CD8-positive, alpha-beta T cell (primary cell): ENCODE measurements at regions of chr16 and their contacts with region 1.

Region 1: GRCh38 chr16:77675464-77676324 is 46.6 kb upstream of the NUDT7 start:
- DNase-seq: peak; percentile 26 to 73 (median 56)
- ATAC-seq: peak; percentile 70
- H3K4me3 ChIP-seq: no peak overlapping the region
- H3K4me3 Mint-ChIP-seq: no peak overlapping the region
- H3K27ac ChIP-seq: no peak overlapping the region
- H3K27ac Mint-ChIP-seq: no peak overlapping the region
- H3K4me1 ChIP-seq: no peaks in the 10 kb centered on the region
- H3K4me1 Mint-ChIP-seq: no peaks in the 10 kb centered on the region
- H3K27me3 ChIP-seq: no peaks in the 10 kb centered on the region
- H3K27me3 Mint-ChIP-seq: peaks cover 7% of the 10 kb centered on the region
- CTCF ChIP-seq: peak; percentile 91

Region 2: GRCh38 chr16:77637940-77638339 is 37.8 kb before region 1 on chr16:
- CTCF ChIA-PET with region 1: no interaction called
- POLR2A ChIA-PET with region 1: no interaction called
- intact Hi-C with region 1: no loop called
- DNase-seq: no peak
- ATAC-seq: no peak
- H3K4me3 ChIP-seq: no peak overlapping the region
- H3K4me3 Mint-ChIP-seq: no peak overlapping the region
- H3K27ac ChIP-seq: no peak overlapping the region
- H3K27ac Mint-ChIP-seq: no peak overlapping the region
- H3K4me1 ChIP-seq: no peaks in the 10 kb centered on the region
- H3K4me1 Mint-ChIP-seq: no peaks in the 10 kb centered on the region
- H3K27me3 ChIP-seq: no peaks in the 10 kb centered on the region
- H3K27me3 Mint-ChIP-seq: peaks cover 7% of the 10 kb centered on the region
- CTCF ChIP-seq: no peak

Region 3: GRCh38 chr16:77782694-77783093 is 107.0 kb after region 1 on chr16:
- CTCF ChIA-PET with region 1: no interaction called
- POLR2A ChIA-PET with region 1: no interaction called
- intact Hi-C with region 1: loop called in 1 of 2 experiments (anchors 5 kb)
- DNase-seq: no peak
- ATAC-seq: no peak
- H3K4me3 ChIP-seq: no peak overlapping the region
- H3K4me3 Mint-ChIP-seq: no peak overlapping the region
- H3K27ac ChIP-seq: no peak overlapping the region
- H3K27ac Mint-ChIP-seq: no peak overlapping the region
- H3K4me1 ChIP-seq: no peaks in the 10 kb centered on the region
- H3K4me1 Mint-ChIP-seq: no peaks in the 10 kb centered on the region
- H3K27me3 ChIP-seq: peaks cover 0 to 4% of the 10 kb centered on the region in 2 experiments
- H3K27me3 Mint-ChIP-seq: peaks cover 28% of the 10 kb centered on the region
- CTCF ChIP-seq: no peak

Region 4: GRCh38 chr16:77971306-77972271 is 295.9 kb after region 1 on chr16:
- CTCF ChIA-PET with region 1: interaction called, 15 read pairs
- POLR2A ChIA-PET with region 1: no interaction called
- intact Hi-C with region 1: loop called in 1 of 2 experiments (anchors 1 kb)
- DNase-seq: peak; percentile 34 to 83 (median 70)
- ATAC-seq: no peak
- H3K4me3 ChIP-seq: no peak overlapping the region
- H3K4me3 Mint-ChIP-seq: no peak overlapping the region
- H3K27ac ChIP-seq: no peak overlapping the region
- H3K27ac Mint-ChIP-seq: no peak overlapping the region
- H3K4me1 ChIP-seq: no peaks in the 10 kb centered on the region
- H3K4me1 Mint-ChIP-seq: no peaks in the 10 kb centered on the region
- H3K27me3 ChIP-seq: no peaks in the 10 kb centered on the region
- H3K27me3 Mint-ChIP-seq: peaks cover 22% of the 10 kb centered on the region
- CTCF ChIP-seq: peak; percentile 65

Region 5: DNA sequence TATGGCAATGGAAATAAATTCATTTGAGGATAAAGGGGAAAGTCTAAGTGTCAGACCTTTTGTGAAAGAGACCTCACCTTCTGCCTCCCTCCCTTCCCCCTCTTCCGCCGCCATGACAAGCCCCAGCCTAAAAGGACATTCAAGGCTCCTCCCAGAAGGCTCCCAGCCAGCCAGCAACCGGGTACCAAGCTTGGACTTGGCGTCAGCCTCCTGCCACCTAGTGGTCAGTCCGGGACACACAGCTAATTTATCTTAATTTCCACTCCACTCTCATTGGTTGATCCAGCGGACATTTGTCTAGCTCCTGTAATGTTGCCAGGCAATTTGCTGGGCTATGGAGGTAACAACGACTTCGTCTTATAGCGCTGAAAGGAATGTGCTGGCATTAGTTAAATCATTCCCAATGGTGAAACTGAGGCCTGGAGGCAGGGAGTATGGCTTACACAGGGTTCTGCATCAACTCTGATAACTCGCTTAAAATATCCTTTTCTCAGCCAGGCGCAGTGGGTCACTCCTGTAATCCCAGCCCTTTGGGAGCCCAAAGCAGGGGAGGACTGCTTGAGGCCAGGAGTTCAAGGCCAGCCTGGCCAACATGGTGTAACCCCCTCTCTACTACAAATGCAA is 327.3 kb after region 1 on chr16:
- CTCF ChIA-PET with region 1: interaction called, 22 read pairs
- POLR2A ChIA-PET with region 1: interaction called, 3 read pairs
- intact Hi-C with region 1: loop called in 1 of 2 experiments (anchors 1 kb)
- DNase-seq: peak; percentile 16 to 70 (median 51)
- ATAC-seq: peak; percentile 63
- H3K4me3 ChIP-seq: no peak overlapping the region
- H3K4me3 Mint-ChIP-seq: no peak overlapping the region
- H3K27ac ChIP-seq: no peak overlapping the region
- H3K27ac Mint-ChIP-seq: no peak overlapping the region
- H3K4me1 ChIP-seq: no peaks in the 10 kb centered on the region
- H3K4me1 Mint-ChIP-seq: no peaks in the 10 kb centered on the region
- H3K27me3 ChIP-seq: no peaks in the 10 kb centered on the region
- H3K27me3 Mint-ChIP-seq: peaks cover 14% of the 10 kb centered on the region
- CTCF ChIP-seq: peak; percentile 63

Region 6: DNA sequence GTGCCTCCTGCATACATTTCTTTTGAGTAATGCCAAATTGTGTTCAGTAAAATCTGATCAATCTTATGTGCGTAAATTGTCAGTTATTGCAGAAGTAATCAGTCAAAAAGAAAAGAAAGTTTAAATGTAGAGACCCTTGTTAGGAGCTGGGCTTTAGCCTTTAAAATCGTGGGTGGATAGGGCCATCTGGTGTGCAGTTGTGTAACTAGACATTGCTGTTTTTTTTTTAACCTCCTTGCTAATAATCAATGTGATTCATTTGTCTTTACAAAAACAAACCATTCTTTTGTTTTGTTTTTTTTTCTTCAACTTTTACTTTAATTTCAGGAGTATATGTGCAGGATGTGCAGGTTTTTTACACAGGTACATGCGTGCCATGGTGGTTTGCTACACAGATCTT is 418.5 kb after region 1 on chr16:
- CTCF ChIA-PET with region 1: no interaction called
- POLR2A ChIA-PET with region 1: no interaction called
- intact Hi-C with region 1: loop called (anchors 1 to 2 kb)
- DNase-seq: no peak
- ATAC-seq: no peak
- H3K4me3 ChIP-seq: no peak overlapping the region
- H3K4me3 Mint-ChIP-seq: no peak overlapping the region
- H3K27ac ChIP-seq: no peak overlapping the region
- H3K27ac Mint-ChIP-seq: no peak overlapping the region
- H3K4me1 ChIP-seq: peaks cover 6% of the 10 kb centered on the region
- H3K4me1 Mint-ChIP-seq: peaks cover 5% of the 10 kb centered on the region
- H3K27me3 ChIP-seq: no peaks in the 10 kb centered on the region
- H3K27me3 Mint-ChIP-seq: peaks cover 9% of the 10 kb centered on the region
- CTCF ChIP-seq: no peak

Region 7: GRCh38 chr16:78099372-78100161 is 423.9 kb after region 1 on chr16 and contains the start of gene WWOX:
- CTCF ChIA-PET with region 1: no interaction called
- POLR2A ChIA-PET with region 1: no interaction called
- intact Hi-C with region 1: loop called (anchors 1 to 2 kb)
- DNase-seq: peak; percentile 90 to 99 (median 95)
- ATAC-seq: peak; percentile 95
- H3K4me3 ChIP-seq: peak within 1 kb of the TSS; percentile 95
- H3K4me3 Mint-ChIP-seq: peak within 1 kb of the TSS; percentile 92
- H3K27ac ChIP-seq: peak within 1 kb of the TSS; percentile 81 to 94
- H3K27ac Mint-ChIP-seq: peak within 1 kb of the TSS; percentile 92
- H3K4me1 ChIP-seq: peaks cover 17% of the 10 kb centered on the region
- H3K4me1 Mint-ChIP-seq: peaks cover 33% of the 10 kb centered on the region
- H3K27me3 ChIP-seq: no peaks in the 10 kb centered on the region
- H3K27me3 Mint-ChIP-seq: no peaks in the 10 kb centered on the region
- CTCF ChIP-seq: peak; percentile 92
- total RNA-seq, gene WWOX: 19.8 to 24.1 TPM

Region 8: GRCh38 chr16:78235168-78235800 is 559.6 kb after region 1 on chr16:
- CTCF ChIA-PET with region 1: interaction called, 3 read pairs
- POLR2A ChIA-PET with region 1: no interaction called
- intact Hi-C with region 1: loop called (anchors 5 to 10 kb)
- DNase-seq: peak; percentile 33 to 74 (median 60)
- ATAC-seq: peak; percentile 73
- H3K4me3 ChIP-seq: no peak overlapping the region
- H3K4me3 Mint-ChIP-seq: no peak overlapping the region
- H3K27ac ChIP-seq: no peak overlapping the region
- H3K27ac Mint-ChIP-seq: no peak overlapping the region
- H3K4me1 ChIP-seq: no peaks in the 10 kb centered on the region
- H3K4me1 Mint-ChIP-seq: peaks cover 2% of the 10 kb centered on the region
- H3K27me3 ChIP-seq: no peaks in the 10 kb centered on the region
- H3K27me3 Mint-ChIP-seq: no peaks in the 10 kb centered on the region
- CTCF ChIP-seq: peak; percentile 83